Left cardiac atrium (tissue), 4 donors: ENCODE measurements at regions of chr12 and their contacts with region 1.

Region 1: DNA sequence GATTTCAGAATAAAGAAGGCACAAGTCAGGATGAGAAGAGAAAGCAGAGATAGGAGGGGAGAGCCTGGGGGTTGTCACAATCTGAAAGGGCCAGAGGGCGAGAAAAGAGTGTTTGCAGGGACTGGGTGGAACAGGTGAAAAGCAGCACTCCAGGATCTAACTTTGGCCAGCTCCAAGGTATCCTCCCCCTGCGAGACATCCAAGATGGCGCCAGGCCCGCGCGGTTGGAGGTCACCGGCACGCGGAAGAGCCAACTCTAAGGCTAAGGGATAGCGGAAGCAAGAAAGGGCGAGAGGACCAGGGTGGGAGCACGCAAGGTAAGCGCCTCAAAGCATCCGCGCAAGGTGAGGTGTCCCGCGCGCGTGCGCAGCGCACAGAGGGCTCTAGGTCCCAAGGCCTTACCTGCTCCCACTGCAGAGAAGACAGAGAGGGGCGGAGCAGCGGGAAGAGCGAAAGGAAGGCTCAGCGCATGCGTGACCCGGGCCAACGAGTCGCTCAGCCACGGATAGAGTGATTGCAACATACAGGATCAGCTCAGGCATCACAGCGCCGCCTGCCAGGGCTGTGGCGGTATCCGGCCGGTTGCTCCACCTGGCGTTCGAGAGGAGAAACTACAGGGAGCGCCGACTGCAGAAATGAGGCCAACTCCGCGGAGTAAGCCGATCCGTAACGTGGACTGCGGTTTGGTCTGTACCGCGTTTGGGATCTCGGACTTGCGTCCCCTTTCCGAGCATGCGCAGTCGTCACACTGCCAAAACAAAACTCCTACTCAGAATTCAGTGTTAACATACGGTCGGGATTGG is at the start of gene ATP5MC2:
- DNase-seq: peak; percentile 98
- ATAC-seq: peak; percentile 95 to 96
- total RNA-seq, gene ATP5MC2: 416 TPM

Region 2: GRCh38 chr12:53543539-53543938 is 132.3 kb before region 1 on chr12:
- intact Hi-C with region 1: loop called (anchors 2 to 10 kb)
- DNase-seq: peak; percentile 61
- ATAC-seq: peak; percentile 93 to 96

Region 3: DNA sequence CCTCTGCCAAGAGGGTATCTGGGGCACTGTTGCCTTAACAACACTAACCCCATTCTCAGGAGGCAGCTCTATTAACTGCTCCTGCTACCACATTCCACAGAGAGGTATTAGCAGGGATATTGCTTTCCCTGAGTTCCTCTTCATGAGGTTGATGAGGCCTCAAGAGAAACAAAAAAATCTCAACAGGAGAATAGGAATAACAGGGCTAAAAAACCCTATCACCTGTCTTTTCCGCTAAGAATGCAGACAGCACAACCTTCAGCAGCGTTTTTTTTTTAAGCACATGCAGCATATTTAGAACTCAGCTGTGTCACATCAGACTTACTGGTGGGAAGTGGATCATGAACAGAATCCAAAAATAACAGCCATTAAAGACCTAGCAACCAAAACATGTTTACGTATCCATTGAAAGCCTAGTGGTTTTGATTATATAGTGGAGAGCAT is 78.9 kb before region 1 on chr12:
- intact Hi-C with region 1: loop called in 1 of 2 experiments (anchors 2 kb)
- DNase-seq: no peak
- ATAC-seq: peak; percentile 78 to 85

Region 4: DNA sequence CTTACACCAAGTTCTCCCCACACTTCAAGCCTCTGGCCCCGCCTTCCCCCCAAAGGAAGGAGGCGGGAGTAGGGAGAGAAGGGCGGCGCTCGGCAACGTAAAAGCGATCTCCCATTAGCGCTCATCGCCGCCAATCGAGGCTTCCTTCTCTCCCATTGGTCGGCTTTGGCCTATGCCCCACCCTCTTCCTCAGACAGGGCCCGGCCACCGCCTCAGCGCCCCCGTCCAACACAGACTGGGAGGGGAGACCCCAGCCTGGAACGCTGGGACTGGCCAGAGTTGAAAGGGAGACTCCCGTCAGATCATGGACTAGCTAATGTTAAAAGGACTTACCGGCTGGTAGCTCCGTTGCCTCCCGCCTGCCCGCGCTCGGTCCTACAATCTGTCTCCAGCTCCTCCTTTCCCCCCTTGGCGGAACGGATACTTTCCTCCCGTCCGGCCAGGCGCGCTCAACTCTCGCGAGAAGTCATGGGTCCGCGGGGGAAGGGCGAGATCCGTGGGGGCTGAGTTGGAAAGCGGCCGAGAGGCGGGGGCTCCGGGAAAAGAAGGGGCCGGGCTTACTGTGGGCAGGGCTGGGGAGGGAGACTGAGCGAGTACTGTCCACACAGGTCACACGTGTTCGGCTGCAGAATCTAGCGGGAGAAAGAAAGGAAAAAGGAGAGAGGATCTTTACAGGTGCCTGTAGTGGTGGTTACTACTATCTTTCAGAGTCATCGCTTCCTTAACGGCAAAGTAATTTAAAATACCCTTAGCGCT is 49.7 kb before region 1 on chr12 and contains the start of gene ATF7:
- intact Hi-C with region 1: loop called in 1 of 2 experiments (anchors 5 kb)
- DNase-seq: peak; percentile 97
- ATAC-seq: peak; percentile 98 to 99
- total RNA-seq, gene ATF7: 30.1 to 34.7 TPM